HEK293 (cell line): ENCODE measurements at regions of chr17 and their contacts with region 1.

Region 1: DNA sequence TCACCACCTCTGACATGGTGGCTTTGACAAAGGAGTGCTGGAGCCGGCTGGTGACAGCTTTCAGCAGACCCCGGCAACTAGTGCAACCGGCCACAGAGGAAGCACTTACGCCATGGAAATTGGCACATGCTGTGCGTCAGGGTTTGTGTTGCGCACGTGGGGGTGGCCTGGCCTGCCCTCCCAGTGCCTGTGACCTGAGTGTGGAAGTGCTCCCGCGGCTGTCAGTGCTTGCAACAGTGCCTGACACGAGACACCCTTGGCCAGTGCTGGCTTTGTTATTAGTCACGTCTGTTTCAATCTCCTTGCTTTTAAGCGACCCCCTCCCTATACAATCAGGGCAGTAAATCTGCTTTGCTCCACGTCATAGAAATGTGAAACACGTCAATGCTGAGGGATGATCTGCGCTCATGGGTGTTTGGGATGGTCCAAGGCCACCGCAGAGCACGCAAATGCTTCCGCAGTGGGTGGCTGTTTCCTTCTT is 64.2 kb downstream of the PGS1 start:
- H3K4me3 ChIP-seq: no peak overlapping the region
- H3K27ac ChIP-seq: no peak overlapping the region
- H3K4me1 ChIP-seq: no peaks in the 10 kb centered on the region
- CTCF ChIP-seq: no peak

Region 2: DNA sequence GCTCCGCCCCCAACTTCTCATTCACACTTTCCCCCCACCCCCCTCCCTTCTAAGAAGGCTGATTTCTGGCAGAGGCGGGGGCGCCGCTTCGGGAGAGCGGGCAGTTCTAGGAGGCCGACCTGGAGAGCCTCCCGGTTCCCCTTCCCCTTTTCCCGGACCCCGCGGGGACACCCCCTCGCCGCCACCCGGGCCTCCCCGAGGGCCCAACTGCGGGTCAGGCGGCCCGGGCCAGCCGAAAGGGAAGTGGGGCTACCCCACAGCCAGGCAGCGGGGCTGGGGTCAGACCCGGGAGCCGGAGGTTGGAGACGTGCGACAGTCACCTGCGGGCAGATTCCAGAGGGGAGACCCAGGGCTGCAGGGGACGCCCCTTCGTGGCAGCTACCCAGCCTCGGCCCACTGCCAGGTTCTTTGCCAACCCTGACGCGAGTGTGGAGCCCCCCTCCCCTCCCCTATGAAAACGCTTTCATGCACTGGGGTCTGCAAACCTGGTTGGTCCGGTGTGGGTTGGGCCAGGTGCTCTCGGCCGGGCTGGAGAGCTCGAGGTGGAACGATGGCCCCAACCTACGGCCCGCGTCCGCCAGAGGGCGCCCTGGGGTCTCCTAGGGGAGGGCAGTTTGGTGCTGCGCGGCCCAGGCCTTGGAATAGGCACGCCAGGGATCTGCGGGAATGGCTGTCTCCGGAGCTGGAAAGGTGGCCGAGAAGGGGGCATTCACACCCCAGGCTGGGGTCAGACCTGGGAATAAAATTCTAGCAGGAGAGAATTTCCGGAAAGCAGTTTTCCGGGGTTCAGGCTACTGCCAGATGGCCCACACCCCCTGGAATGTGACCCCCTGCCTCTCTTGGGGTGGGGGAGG is 82.1 kb before region 1 on chr17:
- CTCF ChIA-PET with region 1: no interaction called
- POLR2A ChIA-PET with region 1: no interaction called
- H3K4me3 ChIP-seq: peak overlapping the region; percentile 76
- H3K27ac ChIP-seq: peak overlapping the region; percentile 67; the same call in 1 of the 2 replicates
- H3K4me1 ChIP-seq: peaks cover 7% of the 10 kb centered on the region
- CTCF ChIP-seq: peak; percentile 96

Region 3: GRCh38 chr17:78462148-78462547 is 19.5 kb after region 1 on chr17:
- CTCF ChIA-PET with region 1: interaction called, 15 read pairs
- POLR2A ChIA-PET with region 1: no interaction called
- H3K4me3 ChIP-seq: no peak overlapping the region
- H3K27ac ChIP-seq: no peak overlapping the region
- H3K4me1 ChIP-seq: no peaks in the 10 kb centered on the region
- CTCF ChIP-seq: no peak

Region 4: DNA sequence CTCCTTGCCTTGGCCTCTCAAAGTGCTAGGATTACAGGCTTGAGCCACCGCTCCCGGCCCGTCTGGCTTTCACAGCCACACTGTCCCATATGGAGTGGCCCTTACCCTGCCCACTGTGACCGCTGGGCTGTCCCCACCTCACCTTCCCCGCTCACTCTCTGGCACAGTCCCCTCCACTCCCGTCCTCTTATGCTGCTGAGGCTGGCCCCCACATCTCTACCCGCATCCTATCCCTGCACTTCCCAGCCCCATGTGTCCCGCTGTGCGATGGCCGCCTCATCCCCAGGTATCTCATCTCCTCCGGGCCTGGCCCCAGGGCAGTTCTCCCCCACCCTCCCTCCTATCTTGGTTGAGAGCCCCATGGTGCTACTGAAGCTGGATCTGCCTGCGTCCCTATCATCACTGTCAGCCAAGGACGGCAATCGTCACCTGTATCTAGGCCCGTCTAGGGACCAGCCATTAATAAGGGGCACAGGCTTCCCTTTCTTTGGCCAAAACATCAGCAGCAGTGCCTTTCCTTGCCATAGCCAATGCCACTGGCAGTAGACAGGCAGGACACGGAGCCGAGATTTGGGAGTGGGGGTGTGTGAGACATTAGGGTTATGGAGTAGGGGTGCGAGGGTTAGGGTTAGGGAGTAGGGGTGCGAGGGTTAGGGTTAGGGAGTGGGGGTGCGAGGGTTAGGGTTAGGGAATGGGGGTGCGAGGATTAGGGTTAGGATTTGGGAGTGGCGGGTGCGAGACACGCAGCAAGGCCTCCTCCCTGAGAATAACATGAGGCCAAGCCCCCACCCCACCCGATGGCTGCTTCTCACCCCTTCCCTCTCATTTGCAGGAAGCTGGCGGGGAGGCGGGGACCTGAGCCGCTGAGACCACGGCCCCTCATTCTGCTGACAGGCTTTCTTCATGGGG is 29.2 kb after region 1 on chr17:
- CTCF ChIA-PET with region 1: interaction called, 10 read pairs
- POLR2A ChIA-PET with region 1: no interaction called
- H3K4me3 ChIP-seq: no peak overlapping the region
- H3K27ac ChIP-seq: no peak overlapping the region
- H3K4me1 ChIP-seq: no peaks in the 10 kb centered on the region
- CTCF ChIP-seq: no peak